Activated naive CD4-positive, alpha-beta T cell treated with anti-CD3 and anti-CD28 coated beads for 36 hours (primary cell): ENCODE measurements at regions of chr1 and their contacts with region 1.

Region 1: DNA sequence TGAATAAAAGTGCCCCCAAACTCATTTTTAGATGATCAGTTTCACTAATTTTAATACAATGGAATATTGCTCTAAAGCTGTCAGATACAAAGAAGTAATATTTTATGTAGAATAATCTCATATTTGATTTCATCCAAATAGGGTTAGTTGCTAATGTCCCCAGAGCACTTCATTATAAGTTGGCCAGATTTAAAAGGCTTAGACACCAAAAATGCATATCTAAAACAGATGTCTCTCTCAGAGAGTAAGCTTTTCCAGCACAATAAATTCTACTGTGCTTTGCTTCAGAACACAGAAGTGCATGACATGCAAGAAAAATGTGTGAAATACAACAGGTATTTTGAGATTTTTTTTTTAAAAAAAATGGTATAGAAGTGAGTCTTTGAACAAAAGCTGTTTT is 194.2 kb downstream of the LRRIQ3 start:
- DNase-seq: no peak
- H3K4me3 Mint-ChIP-seq: no peak overlapping the region
- H3K27ac Mint-ChIP-seq: no peak overlapping the region
- H3K4me1 Mint-ChIP-seq: no peaks in the 10 kb centered on the region
- H3K27me3 Mint-ChIP-seq: no peaks in the 10 kb centered on the region

Region 2: DNA sequence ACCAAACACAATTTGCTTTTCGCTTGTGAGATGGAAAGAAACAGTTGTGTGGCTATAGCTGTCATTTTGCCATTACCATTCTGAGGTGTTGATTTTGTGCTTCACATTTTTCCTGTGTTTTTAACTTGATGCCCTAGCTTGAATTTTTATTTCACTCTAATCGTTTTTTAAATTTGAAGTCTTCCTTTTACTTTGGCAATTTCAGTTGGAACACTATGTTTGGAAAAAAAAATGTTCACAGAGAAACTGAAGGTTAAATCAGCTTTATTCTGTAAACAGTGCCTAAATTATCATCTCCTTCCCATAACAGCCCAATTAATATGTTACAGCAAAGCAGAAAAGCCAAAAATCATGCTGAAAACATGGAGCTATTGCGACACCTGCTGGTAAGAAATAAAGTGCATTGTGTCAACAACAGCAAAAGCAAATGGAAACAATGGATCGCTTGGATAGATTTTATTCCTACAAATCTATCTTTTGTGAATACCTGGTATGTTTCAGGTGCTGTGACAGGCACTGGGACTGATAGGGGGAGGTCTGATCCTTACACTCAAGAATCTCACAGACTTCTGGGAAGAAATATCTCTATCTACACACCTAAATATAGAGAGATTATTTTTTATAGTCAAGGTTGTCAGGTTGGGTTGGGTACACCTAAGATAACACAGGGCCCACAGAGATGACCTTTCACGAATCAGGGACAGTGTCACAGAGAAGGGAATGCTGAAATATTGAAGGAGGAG is 686.0 kb after region 1 on chr1:
- CTCF ChIA-PET with region 1: no interaction called
- intact Hi-C with region 1: loop called (anchors 5 kb)
- DNase-seq: peak; percentile 58
- H3K4me3 Mint-ChIP-seq: no peak overlapping the region
- H3K27ac Mint-ChIP-seq: no peak overlapping the region
- H3K4me1 Mint-ChIP-seq: peaks cover 2% of the 10 kb centered on the region
- H3K27me3 Mint-ChIP-seq: peaks cover 2% of the 10 kb centered on the region